ENCODE measurements at regions of chr1 and their contacts with region 1.

Region 1: GRCh38 chr1:50332941-50333594 is 90.2 kb downstream of the DMRTA2 start:
- DNase-seq: peak; percentile 50
- ATAC-seq: peak; percentile 83
- H3K4me3 Mint-ChIP-seq: peak overlapping the region; percentile 6
- H3K27ac Mint-ChIP-seq: no peak overlapping the region
- H3K4me1 Mint-ChIP-seq: peaks cover 6% of the 10 kb centered on the region
- H3K27me3 Mint-ChIP-seq: peaks cover 34% of the 10 kb centered on the region

Region 2: DNA sequence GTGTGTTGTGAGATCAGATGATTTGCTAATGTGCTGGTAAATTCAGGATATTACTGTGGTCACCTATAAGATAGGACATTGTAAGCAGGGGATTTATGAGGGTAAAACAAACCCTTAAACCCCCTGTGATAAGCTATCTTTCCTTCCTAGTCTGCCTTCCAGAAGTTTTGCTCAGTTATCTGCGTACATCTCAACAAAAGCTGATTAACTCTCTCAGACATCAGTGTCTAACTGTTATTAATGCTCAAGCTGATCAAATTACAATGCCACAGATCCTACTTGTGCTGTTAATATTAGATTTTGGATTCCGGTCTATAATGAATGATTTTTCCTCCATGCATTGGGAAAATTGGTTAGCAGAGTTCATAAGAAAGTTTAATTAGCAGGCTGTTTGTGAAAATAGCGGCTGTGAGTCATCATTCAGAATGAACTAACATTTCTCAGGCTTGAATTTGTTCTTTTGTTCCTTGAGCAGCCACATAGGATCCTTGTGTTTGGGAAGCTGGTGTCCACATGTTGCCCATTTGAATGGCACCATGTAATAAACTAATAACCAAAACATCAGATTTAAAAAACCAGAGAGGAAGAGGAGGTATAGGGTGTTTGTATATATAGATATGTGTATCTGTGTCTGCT is 175.6 kb before region 1 on chr1:
- CTCF ChIA-PET with region 1: no interaction called
- POLR2A ChIA-PET with region 1: no interaction called
- DNase-seq: no peak
- ATAC-seq: no peak
- H3K4me3 Mint-ChIP-seq: no peak overlapping the region
- H3K27ac Mint-ChIP-seq: no peak overlapping the region
- H3K4me1 Mint-ChIP-seq: no peaks in the 10 kb centered on the region
- H3K27me3 Mint-ChIP-seq: no peaks in the 10 kb centered on the region

Region 3: GRCh38 chr1:50343323-50343722 is 10.3 kb after region 1 on chr1:
- CTCF ChIA-PET with region 1: interaction called, 16 read pairs
- POLR2A ChIA-PET with region 1: no interaction called
- DNase-seq: no peak
- ATAC-seq: no peak
- H3K4me3 Mint-ChIP-seq: no peak overlapping the region
- H3K27ac Mint-ChIP-seq: no peak overlapping the region
- H3K4me1 Mint-ChIP-seq: peaks cover 3% of the 10 kb centered on the region
- H3K27me3 Mint-ChIP-seq: peaks cover 17% of the 10 kb centered on the region

Region 4: GRCh38 chr1:50352428-50352827 is 19.4 kb after region 1 on chr1:
- CTCF ChIA-PET with region 1: interaction called, 10 read pairs
- POLR2A ChIA-PET with region 1: no interaction called
- DNase-seq: no peak
- ATAC-seq: no peak
- H3K4me3 Mint-ChIP-seq: no peak overlapping the region
- H3K27ac Mint-ChIP-seq: no peak overlapping the region
- H3K4me1 Mint-ChIP-seq: no peaks in the 10 kb centered on the region
- H3K27me3 Mint-ChIP-seq: peaks cover 7% of the 10 kb centered on the region